ENCODE measurements at regions of chr11 and their contacts with region 1.

Region 1: DNA sequence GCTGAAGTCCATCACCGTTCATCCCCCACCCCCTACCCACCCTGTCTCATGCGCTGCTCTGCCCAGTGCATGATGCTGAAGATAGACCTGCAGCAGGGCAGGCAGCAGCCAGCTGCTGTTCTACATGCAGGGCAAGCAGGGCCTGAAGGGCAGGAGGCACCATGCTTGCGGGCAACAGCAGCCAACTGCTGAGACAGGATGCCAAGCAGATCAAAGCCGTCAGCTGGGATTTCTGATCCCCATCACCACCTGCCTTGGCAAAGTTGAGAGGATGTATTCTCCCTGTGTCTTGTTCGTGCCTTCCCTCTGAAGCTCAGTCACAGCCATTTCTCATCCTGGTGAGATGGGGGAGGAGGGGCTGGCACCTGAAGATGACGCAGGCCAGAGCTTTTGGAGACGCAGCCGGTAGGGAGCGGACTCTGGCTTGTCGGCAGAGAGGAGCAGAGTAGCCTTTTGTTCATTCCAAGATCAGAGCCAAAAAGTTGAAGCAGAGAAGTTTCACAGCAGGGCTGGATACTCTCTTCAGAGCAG is 227.0 kb downstream of the GRIK4 start:
- DNase-seq: no peak
- ATAC-seq: no peak
- H3K4me3 ChIP-seq: no peak overlapping the region
- H3K27ac ChIP-seq: no peak overlapping the region
- H3K4me1 ChIP-seq: no peaks in the 10 kb centered on the region
- H3K27me3 ChIP-seq: peaks cover 0 to 12% (median 0%) of the 10 kb centered on the region in 7 donors
- CTCF ChIP-seq: no peak

Region 2: DNA sequence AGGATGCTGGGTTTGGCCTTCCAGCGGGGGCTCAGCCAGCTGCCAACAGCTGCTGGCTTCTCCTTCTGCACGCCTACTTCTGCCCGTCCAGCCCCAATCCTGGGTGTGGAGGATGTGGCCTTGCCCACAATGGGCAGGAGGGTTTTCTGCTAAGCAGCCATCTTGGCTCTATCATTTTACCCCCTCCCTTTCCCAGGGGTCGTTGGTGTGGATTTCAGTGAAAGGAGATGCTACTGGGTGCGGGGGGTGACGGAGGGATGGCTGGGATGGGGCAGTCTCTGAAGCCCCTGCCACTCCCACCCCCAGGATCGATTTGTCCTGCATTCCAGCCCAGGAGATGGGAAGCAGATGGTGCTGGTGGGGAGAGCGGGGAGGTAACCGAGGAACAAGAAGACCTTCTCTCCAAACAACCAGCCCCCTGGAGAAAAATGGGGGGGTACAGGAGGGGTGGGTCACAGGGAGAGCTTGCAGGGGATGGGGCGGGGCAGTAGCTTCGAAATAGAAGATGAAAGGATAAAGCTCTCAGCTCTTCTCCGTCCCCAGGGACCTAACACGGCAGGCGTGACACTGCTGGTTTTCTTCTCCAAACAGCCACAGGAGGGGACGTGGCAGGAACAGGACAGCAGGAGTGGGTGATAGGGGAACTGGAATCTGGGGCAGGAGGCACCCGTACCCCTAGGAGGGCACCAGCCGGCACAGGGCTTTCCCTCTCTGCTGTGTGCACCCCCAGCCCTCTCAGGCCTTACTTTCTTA is 1078.4 kb before region 1 on chr11:
- intact Hi-C with region 1: loop called in 1 of 10 experiments (anchors 5 kb)
- DNase-seq: no peak
- ATAC-seq: no peak
- H3K4me3 ChIP-seq: no peak overlapping the region
- H3K27ac ChIP-seq: no peak overlapping the region
- H3K4me1 ChIP-seq: no peaks in the 10 kb centered on the region
- H3K27me3 ChIP-seq: no peaks in the 10 kb centered on the region
- CTCF ChIP-seq: no peak